ENCODE measurements at regions of chr3 and their contacts with region 1.

Region 1: GRCh38 chr3:134600685-134601463 is 49.9 kb downstream of the KY start:
- DNase-seq: peak; percentile 49 to 90 (median 80)

Region 2: GRCh38 chr3:134299185-134299887 is 301.5 kb before region 1 on chr3:
- intact Hi-C with region 1: no loop called
- DNase-seq: peak in 4 of 42 donors; percentile 17 to 48 (median 36)

Region 3: DNA sequence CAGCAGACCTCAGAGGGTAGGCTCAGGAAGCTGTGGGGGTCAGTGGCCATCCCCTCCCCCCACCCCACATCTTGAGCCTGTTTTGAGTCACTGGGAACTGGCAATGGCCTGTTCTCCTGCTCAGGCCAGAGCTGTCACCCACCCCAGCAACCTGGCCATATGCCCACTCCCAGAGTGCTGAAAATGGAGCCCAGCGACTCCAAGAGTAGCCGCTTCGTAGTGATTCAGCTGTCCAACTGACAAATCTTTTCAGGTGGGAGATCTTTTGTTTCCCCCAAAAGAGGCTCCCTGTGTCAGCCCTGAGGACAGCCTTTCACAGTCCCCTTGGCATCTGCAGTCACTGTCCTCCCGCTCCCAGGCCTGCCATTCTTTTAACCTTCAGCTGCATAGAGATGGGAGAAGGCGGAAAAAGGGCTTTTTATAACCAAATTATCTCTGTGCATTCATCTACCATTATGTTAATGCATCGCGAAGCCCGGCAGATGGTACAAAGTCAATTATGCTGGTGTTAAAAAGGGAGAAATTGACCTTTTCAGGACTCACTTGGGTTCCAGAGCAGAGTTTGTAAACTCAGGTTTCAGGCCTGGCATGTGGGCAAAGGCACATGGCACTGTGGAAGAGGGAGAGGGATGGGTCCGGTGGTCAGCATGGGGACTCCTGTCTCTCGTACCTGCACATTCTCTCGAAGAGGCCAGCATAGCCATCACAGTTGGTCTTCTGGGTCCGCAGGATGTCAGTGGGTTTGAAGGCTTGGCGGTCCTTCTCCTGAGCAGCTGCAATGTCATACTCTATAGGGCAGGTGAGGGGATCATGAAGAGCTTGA is 17.8 kb after region 1 on chr3:
- intact Hi-C with region 1: no loop called
- DNase-seq: peak in 9 of 42 donors; percentile 7 to 73 (median 48)

Region 4: DNA sequence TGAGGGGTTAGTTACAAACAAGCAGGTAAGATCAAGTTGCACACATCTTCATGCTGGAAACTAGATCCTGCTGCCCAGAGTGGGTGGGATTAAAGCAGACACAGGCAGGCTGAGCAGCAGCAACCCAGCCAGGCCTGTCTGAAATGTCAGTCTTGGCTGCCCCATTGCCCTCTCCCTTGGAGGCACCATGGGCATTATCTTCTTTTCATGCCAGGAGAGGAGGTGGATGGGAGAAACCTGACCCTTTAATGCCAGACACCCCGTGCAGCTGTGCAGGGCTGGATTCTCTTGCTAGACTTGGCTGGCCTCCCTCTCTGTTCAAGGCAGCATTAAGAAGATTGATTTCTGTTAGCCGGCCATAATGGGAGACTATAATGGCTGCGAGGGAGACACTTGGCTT is 171.1 kb after region 1 on chr3:
- intact Hi-C with region 1: no loop called
- DNase-seq: no peak

Region 5: GRCh38 chr3:135097276-135097946 is 496.5 kb after region 1 on chr3:
- intact Hi-C with region 1: loop called (anchors 5 kb)
- DNase-seq: peak in 1 of 42 donors; percentile 29

Region 6: GRCh38 chr3:135895106-135895733 is 1294.3 kb after region 1 on chr3:
- intact Hi-C with region 1: loop called (anchors 5 kb)
- DNase-seq: peak; percentile 48 to 90 (median 80)